Naive thymus-derived CD4-positive, alpha-beta T cell (primary cell): ENCODE measurements at regions of chr12 and their contacts with region 1.

Region 1: GRCh38 chr12:56299853-56300643 is at the start of gene CS:
- DNase-seq: peak; percentile 95 to 99 (median 98)
- ATAC-seq: peak; percentile 98
- H3K4me3 ChIP-seq: peak within 1 kb of the TSS; percentile 73
- H3K4me3 Mint-ChIP-seq: peak within 1 kb of the TSS; percentile 93 to 100 (median 96)
- H3K27ac ChIP-seq: peak within 1 kb of the TSS; percentile 94
- H3K27ac Mint-ChIP-seq: peak within 1 kb of the TSS; percentile 93 to 99 (median 97)
- H3K4me1 ChIP-seq: peaks cover 26 to 48% of the 10 kb centered on the region in 2 donors
- H3K4me1 Mint-ChIP-seq: peaks cover 27 to 58% (median 53%) of the 10 kb centered on the region in 7 donors
- H3K27me3 ChIP-seq: no peaks in the 10 kb centered on the region
- H3K27me3 Mint-ChIP-seq: no peaks in the 10 kb centered on the region
- total RNA-seq, gene CS: 126 to 241 (median 167) TPM

Region 2: GRCh38 chr12:55829967-55830600 is 470.0 kb before region 1 on chr12:
- CTCF ChIA-PET with region 1: no interaction called
- POLR2A ChIA-PET with region 1: no interaction called
- intact Hi-C with region 1: loop called in 1 of 2 experiments (anchors 1 kb)
- DNase-seq: peak in 5 of 9 donors; percentile 16 to 44 (median 20)
- ATAC-seq: peak; percentile 2
- H3K4me3 ChIP-seq: peak overlapping the region; percentile 99
- H3K4me3 Mint-ChIP-seq: peak overlapping the region; percentile 88 to 99 (median 99)
- H3K27ac ChIP-seq: peak overlapping the region; percentile 84
- H3K27ac Mint-ChIP-seq: peak overlapping the region; percentile 85 to 98 (median 95)
- H3K4me1 ChIP-seq: peaks cover 37 to 40% of the 10 kb centered on the region in 2 donors
- H3K4me1 Mint-ChIP-seq: peaks cover 42 to 69% (median 53%) of the 10 kb centered on the region in 7 donors
- H3K27me3 ChIP-seq: no peaks in the 10 kb centered on the region
- H3K27me3 Mint-ChIP-seq: no peaks in the 10 kb centered on the region

Region 3: GRCh38 chr12:56152318-56153033 is 147.6 kb before region 1 on chr12 and contains the start of gene MYL6B:
- CTCF ChIA-PET with region 1: no interaction called
- POLR2A ChIA-PET with region 1: no interaction called
- intact Hi-C with region 1: loop called in 1 of 2 experiments (anchors 1 kb)
- DNase-seq: peak; percentile 79 to 94 (median 87)
- ATAC-seq: peak; percentile 98
- H3K4me3 ChIP-seq: peak within 1 kb of the TSS; percentile 86
- H3K4me3 Mint-ChIP-seq: peak within 1 kb of the TSS; percentile 80 to 96 (median 92)
- H3K27ac ChIP-seq: peak within 1 kb of the TSS; percentile 80
- H3K27ac Mint-ChIP-seq: peak within 1 kb of the TSS; percentile 84 to 99 (median 97)
- H3K4me1 ChIP-seq: peaks cover 22 to 25% of the 10 kb centered on the region in 2 donors
- H3K4me1 Mint-ChIP-seq: peaks cover 17 to 55% (median 39%) of the 10 kb centered on the region in 7 donors
- H3K27me3 ChIP-seq: no peaks in the 10 kb centered on the region
- H3K27me3 Mint-ChIP-seq: no peaks in the 10 kb centered on the region
- total RNA-seq, gene MYL6B: 3.7 to 60.3 (median 8.9) TPM

Region 4: DNA sequence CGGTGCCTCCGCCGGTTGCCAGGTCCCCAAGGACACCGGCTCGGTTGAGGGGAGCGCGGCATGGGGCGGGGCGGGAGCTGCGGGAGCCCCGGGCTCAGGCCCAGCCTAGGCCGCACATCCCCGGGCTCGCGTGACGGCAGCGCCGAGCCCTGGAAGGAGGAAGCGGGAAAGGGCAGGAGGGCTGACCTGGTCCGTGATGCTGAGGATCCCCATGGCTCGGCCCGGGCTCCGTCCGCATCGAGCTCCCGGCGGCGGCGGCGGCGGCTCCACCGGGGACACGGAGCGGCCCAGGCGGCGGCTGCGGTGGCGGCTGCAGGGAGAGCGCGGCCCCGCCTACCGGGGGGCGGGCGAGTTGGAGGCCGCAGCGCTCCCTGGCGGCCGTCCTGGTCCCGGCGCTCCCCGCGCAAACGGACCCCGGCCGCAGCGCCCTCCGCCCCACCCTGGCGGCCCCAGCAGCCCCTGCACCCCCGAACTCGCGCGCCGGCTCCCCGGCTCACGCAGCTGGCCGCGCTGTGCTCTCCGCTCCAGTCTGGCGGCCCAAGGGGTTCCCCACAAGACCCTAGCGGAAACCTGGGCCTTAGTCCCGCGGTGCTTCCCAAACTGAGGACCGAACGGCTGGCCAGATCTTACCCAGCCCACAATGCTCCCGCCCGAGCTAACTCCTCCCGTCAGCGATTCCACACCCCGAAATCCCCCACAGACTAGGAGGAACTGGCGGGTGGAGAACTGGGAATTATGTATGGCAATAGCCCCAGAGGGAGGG is 41.8 kb before region 1 on chr12 and contains the start of gene ANKRD52:
- CTCF ChIA-PET with region 1: no interaction called
- POLR2A ChIA-PET with region 1: interaction called, 3 read pairs
- intact Hi-C with region 1: loop called in 1 of 2 experiments (anchors 1 kb)
- DNase-seq: peak; percentile 69 to 92 (median 84)
- ATAC-seq: peak; percentile 99
- H3K4me3 ChIP-seq: peak within 1 kb of the TSS; percentile 99
- H3K4me3 Mint-ChIP-seq: peak within 1 kb of the TSS; percentile 87 to 97 (median 93)
- H3K27ac ChIP-seq: peak within 1 kb of the TSS; percentile 90
- H3K27ac Mint-ChIP-seq: peak within 1 kb of the TSS; percentile 83 to 94 (median 90)
- H3K4me1 ChIP-seq: peaks cover 18 to 19% of the 10 kb centered on the region in 2 donors
- H3K4me1 Mint-ChIP-seq: peaks cover 13 to 27% (median 22%) of the 10 kb centered on the region in 7 donors
- H3K27me3 ChIP-seq: no peaks in the 10 kb centered on the region
- H3K27me3 Mint-ChIP-seq: peaks cover 0 to 2% (median 0%) of the 10 kb centered on the region in 5 donors
- total RNA-seq, gene ANKRD52: 26.9 to 64.4 (median 40.7) TPM

Region 5: GRCh38 chr12:56315622-56316473 is 15.8 kb after region 1 on chr12 and contains the start of gene CNPY2:
- CTCF ChIA-PET with region 1: interaction called, 4 read pairs
- POLR2A ChIA-PET with region 1: interaction called, 7 read pairs
- intact Hi-C with region 1: loop called (anchors 1 kb)
- DNase-seq: peak; percentile 83 to 94 (median 92)
- ATAC-seq: peak; percentile 93
- H3K4me3 ChIP-seq: peak within 1 kb of the TSS; percentile 100
- H3K4me3 Mint-ChIP-seq: peak within 1 kb of the TSS; percentile 96 to 99 (median 98)
- H3K27ac ChIP-seq: peak within 1 kb of the TSS; percentile 97
- H3K27ac Mint-ChIP-seq: peak within 1 kb of the TSS; percentile 93 to 99 (median 99)
- H3K4me1 ChIP-seq: peaks cover 13 to 16% of the 10 kb centered on the region in 2 donors
- H3K4me1 Mint-ChIP-seq: peaks cover 5 to 23% (median 13%) of the 10 kb centered on the region in 7 donors
- H3K27me3 ChIP-seq: no peaks in the 10 kb centered on the region
- H3K27me3 Mint-ChIP-seq: no peaks in the 10 kb centered on the region
- total RNA-seq, gene CNPY2: 48.4 to 134 (median 87.6) TPM

Region 6: DNA sequence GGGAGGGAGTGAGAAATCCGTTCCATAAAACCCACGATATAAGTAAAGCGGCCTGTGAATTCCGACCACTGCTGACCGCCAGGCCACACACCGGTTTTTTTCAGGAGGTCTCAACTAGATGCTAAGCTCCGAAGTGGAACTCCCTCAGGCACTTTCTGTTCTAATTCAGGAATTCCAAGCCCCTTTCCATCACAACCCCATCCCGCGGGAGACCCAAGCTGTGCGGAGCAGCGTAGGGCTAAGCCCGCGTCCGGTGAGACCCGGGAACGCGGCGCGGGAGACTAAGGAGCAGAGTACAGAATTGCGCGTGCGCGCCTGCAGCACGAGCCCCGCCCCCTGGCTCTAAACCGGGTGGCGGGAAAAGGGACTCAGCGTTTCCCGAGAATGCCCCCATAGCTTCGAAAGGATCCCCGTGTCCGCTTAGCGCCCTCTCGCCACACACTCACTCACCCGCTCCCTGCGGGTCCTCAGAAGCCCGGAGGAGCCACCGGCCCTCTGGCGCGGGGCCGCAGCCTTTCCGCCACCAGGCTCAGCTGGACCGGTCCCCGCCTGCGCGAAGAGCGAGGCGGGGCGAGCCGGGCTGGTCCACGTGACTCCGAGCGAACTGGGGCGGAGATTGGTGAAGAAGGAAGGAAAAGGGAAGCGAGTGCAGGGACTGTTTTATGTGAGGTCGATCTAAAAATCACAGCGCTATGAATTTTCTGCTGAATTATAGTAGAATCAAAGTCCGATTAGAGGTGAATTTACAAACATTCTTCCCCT is 149.0 kb after region 1 on chr12 and contains the start of gene TIMELESS:
- CTCF ChIA-PET with region 1: no interaction called
- POLR2A ChIA-PET with region 1: interaction called, 3 read pairs
- intact Hi-C with region 1: loop called (anchors 1 kb)
- DNase-seq: peak; percentile 74 to 89 (median 85)
- ATAC-seq: peak; percentile 98
- H3K4me3 ChIP-seq: peak within 1 kb of the TSS; percentile 97
- H3K4me3 Mint-ChIP-seq: peak within 1 kb of the TSS; percentile 77 to 94 (median 92)
- H3K27ac ChIP-seq: peak within 1 kb of the TSS; percentile 74
- H3K27ac Mint-ChIP-seq: peak within 1 kb of the TSS; percentile 86 to 98 (median 93)
- H3K4me1 ChIP-seq: peaks cover 0 to 7% of the 10 kb centered on the region in 2 donors
- H3K4me1 Mint-ChIP-seq: peaks cover 12 to 36% (median 24%) of the 10 kb centered on the region in 7 donors
- H3K27me3 ChIP-seq: no peaks in the 10 kb centered on the region
- H3K27me3 Mint-ChIP-seq: no peaks in the 10 kb centered on the region
- total RNA-seq, gene TIMELESS: 4.4 to 42.3 (median 5.4) TPM